Activated CD4-positive, alpha-beta memory T cell treated with anti-CD3 and anti-CD28 coated beads, Interleukin-2, amount 10 ng/mL, durations not matched to agents 7 days and 5 days (primary cell): ENCODE measurements at regions of chr3 and their contacts with region 1.

Region 1: GRCh38 chr3:48548729-48549705 is 7.6 kb downstream of the PFKFB4 start:
- DNase-seq: peak; percentile 87
- H3K4me3 Mint-ChIP-seq: no peak overlapping the region
- H3K27ac Mint-ChIP-seq: no peak overlapping the region
- H3K4me1 Mint-ChIP-seq: peaks cover 8% of the 10 kb centered on the region
- H3K27me3 Mint-ChIP-seq: no peaks in the 10 kb centered on the region

Region 2: GRCh38 chr3:48429317-48429959 is 119.6 kb before region 1 on chr3:
- CTCF ChIA-PET with region 1: interaction called, 10 read pairs
- POLR2A ChIA-PET with region 1: no interaction called
- DNase-seq: peak; percentile 54
- H3K4me3 Mint-ChIP-seq: peak overlapping the region; percentile 63
- H3K27ac Mint-ChIP-seq: no peak overlapping the region
- H3K4me1 Mint-ChIP-seq: peaks cover 21% of the 10 kb centered on the region
- H3K27me3 Mint-ChIP-seq: peaks cover 18% of the 10 kb centered on the region